Activated CD4-positive, alpha-beta memory T cell treated with anti-CD3 and anti-CD28 coated beads for 36 hours (primary cell): ENCODE measurements at regions of chr9 and their contacts with region 1.

Region 1: GRCh38 chr9:113657703-113658544 is 194.4 kb downstream of the RGS3 start:
- DNase-seq: peak; percentile 87
- H3K4me3 Mint-ChIP-seq: no peak overlapping the region
- H3K27ac Mint-ChIP-seq: no peak overlapping the region
- H3K4me1 Mint-ChIP-seq: peaks cover 6% of the 10 kb centered on the region
- H3K27me3 Mint-ChIP-seq: peaks cover 4% of the 10 kb centered on the region

Region 2: GRCh38 chr9:113401027-113401792 is 256.7 kb before region 1 on chr9 and contains the start of gene ALAD:
- CTCF ChIA-PET with region 1: interaction called, 81 read pairs
- POLR2A ChIA-PET with region 1: no interaction called
- intact Hi-C with region 1: loop called (anchors 1 kb)
- DNase-seq: peak; percentile 99
- H3K4me3 Mint-ChIP-seq: peak within 1 kb of the TSS; percentile 91
- H3K27ac Mint-ChIP-seq: peak within 1 kb of the TSS; percentile 78
- H3K4me1 Mint-ChIP-seq: peaks cover 19% of the 10 kb centered on the region
- H3K27me3 Mint-ChIP-seq: no peaks in the 10 kb centered on the region
- total RNA-seq, gene ALAD: 21.4 to 22.9 TPM

Region 3: GRCh38 chr9:113454914-113455761 is 202.8 kb before region 1 on chr9:
- CTCF ChIA-PET with region 1: interaction called, 20 read pairs
- POLR2A ChIA-PET with region 1: no interaction called
- intact Hi-C with region 1: no loop called
- DNase-seq: peak; percentile 25
- H3K4me3 Mint-ChIP-seq: no peak overlapping the region
- H3K27ac Mint-ChIP-seq: no peak overlapping the region
- H3K4me1 Mint-ChIP-seq: peaks cover 4% of the 10 kb centered on the region
- H3K27me3 Mint-ChIP-seq: no peaks in the 10 kb centered on the region

Region 4: GRCh38 chr9:113548221-113549041 is 109.5 kb before region 1 on chr9:
- CTCF ChIA-PET with region 1: interaction called, 11 read pairs
- POLR2A ChIA-PET with region 1: no interaction called
- intact Hi-C with region 1: no loop called
- DNase-seq: peak; percentile 53
- H3K4me3 Mint-ChIP-seq: no peak overlapping the region
- H3K27ac Mint-ChIP-seq: peak overlapping the region; percentile 75
- H3K4me1 Mint-ChIP-seq: peaks cover 26% of the 10 kb centered on the region
- H3K27me3 Mint-ChIP-seq: no peaks in the 10 kb centered on the region

Region 5: GRCh38 chr9:113614843-113615648 is 42.9 kb before region 1 on chr9:
- CTCF ChIA-PET with region 1: interaction called, 13 read pairs
- POLR2A ChIA-PET with region 1: no interaction called
- intact Hi-C with region 1: no loop called
- DNase-seq: peak; percentile 65
- H3K4me3 Mint-ChIP-seq: peak overlapping the region; percentile 40
- H3K27ac Mint-ChIP-seq: peak overlapping the region; percentile 83
- H3K4me1 Mint-ChIP-seq: peaks cover 47% of the 10 kb centered on the region
- H3K27me3 Mint-ChIP-seq: no peaks in the 10 kb centered on the region

Region 6: DNA sequence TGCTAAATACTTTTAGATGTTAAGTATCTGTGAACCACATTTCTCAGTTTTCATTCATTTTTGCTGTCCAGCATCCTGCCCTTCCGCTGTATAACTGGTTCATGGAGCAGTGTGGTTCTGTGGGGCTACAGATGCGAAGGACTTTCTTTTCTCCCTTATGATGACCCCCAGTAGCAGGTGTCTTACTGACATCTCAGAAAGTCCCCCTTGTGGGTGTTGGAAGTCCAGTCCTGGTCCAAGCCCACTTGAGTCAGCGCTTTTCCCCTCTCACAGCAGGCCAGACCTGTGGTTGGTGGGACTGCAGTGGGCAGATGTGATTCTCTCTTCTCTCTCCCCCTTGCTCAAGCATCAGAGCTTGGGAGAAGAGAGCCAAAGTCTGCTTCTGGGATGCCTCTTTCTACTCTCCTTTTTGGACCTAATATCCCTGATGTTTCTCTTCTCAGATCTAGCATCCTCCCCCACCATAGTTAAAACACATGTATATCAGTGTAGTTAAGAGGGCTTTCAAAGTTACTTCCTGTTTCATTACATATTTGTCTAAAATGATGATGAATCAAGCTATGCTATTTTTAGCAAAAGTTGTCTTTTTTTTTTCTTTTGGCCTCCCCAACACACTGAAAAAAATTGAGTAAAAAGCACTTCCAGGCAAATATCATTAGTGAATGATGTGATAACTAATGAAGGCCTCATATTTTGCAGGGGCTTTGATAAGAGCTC is 98.7 kb after region 1 on chr9:
- CTCF ChIA-PET with region 1: no interaction called
- POLR2A ChIA-PET with region 1: no interaction called
- intact Hi-C with region 1: no loop called
- DNase-seq: no peak
- H3K4me3 Mint-ChIP-seq: no peak overlapping the region
- H3K27ac Mint-ChIP-seq: no peak overlapping the region
- H3K4me1 Mint-ChIP-seq: no peaks in the 10 kb centered on the region
- H3K27me3 Mint-ChIP-seq: peaks cover 32% of the 10 kb centered on the region